GM23248 (cell line): ENCODE measurements at regions of chr12 and their contacts with region 1.

Region 1: DNA sequence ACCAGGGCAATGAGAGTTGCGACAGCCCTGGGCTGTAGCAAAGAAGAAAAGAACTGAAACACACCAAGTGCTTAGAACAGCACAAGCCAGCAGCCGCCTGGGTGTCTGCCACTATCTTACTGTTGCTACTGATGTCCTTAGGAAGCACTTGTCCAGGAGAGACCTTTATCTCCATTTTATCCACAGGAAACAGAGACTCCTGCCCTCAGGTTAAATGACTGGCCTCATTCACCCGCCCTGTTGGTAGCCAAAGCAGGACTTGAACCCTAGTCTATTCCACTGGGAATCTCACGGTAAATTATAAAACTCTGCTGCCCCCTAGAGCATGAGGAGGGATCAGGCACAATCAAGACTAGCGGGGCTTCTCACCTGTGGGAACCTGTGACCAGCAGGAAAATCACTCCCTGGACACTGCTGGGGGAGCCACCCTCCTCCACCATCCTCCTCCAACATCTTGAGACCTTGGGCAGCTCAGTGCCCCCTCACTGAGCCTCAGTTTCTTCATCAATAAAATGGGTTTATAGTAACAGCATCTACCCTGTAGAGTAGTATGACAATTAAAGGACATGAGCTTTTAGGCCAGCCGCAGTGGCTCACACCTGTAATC is 20.5 kb upstream of the TESC start:
- DNase-seq: no peak
- H3K4me3 ChIP-seq: no peak overlapping the region
- H3K27ac ChIP-seq: no peak overlapping the region
- H3K4me1 ChIP-seq: no peaks in the 10 kb centered on the region
- H3K27me3 ChIP-seq: no peaks in the 10 kb centered on the region

Region 2: GRCh38 chr12:116703214-116703795 is 416.4 kb before region 1 on chr12:
- in situ Hi-C with region 1: loop called (anchors 25 kb)
- DNase-seq: peak; percentile 76
- H3K4me3 ChIP-seq: no peak overlapping the region
- H3K27ac ChIP-seq: no peak overlapping the region
- H3K4me1 ChIP-seq: no peaks in the 10 kb centered on the region
- H3K27me3 ChIP-seq: no peaks in the 10 kb centered on the region

Region 3: GRCh38 chr12:116977465-116978380 is 142.0 kb before region 1 on chr12:
- in situ Hi-C with region 1: no loop called
- DNase-seq: no peak
- H3K4me3 ChIP-seq: no peak overlapping the region
- H3K27ac ChIP-seq: no peak overlapping the region
- H3K4me1 ChIP-seq: peaks cover 28% of the 10 kb centered on the region
- H3K27me3 ChIP-seq: no peaks in the 10 kb centered on the region